ENCODE measurements at regions of chr19 and their contacts with region 1.

Region 1: GRCh38 chr19:35090506-35091237 is 25.0 kb upstream of the FXYD3 start:
- H3K4me3 Mint-ChIP-seq: no peak overlapping the region
- H3K27ac Mint-ChIP-seq: no peak overlapping the region
- H3K4me1 Mint-ChIP-seq: no peaks in the 10 kb centered on the region
- H3K27me3 Mint-ChIP-seq: peaks cover 26% of the 10 kb centered on the region

Region 2: GRCh38 chr19:35044317-35045117 is 46.2 kb before region 1 on chr19:
- intact Hi-C with region 1: loop called (anchors 10 kb)
- H3K4me3 Mint-ChIP-seq: no peak overlapping the region
- H3K27ac Mint-ChIP-seq: no peak overlapping the region
- H3K4me1 Mint-ChIP-seq: peaks cover 25% of the 10 kb centered on the region
- H3K27me3 Mint-ChIP-seq: peaks cover 61% of the 10 kb centered on the region

Region 3: DNA sequence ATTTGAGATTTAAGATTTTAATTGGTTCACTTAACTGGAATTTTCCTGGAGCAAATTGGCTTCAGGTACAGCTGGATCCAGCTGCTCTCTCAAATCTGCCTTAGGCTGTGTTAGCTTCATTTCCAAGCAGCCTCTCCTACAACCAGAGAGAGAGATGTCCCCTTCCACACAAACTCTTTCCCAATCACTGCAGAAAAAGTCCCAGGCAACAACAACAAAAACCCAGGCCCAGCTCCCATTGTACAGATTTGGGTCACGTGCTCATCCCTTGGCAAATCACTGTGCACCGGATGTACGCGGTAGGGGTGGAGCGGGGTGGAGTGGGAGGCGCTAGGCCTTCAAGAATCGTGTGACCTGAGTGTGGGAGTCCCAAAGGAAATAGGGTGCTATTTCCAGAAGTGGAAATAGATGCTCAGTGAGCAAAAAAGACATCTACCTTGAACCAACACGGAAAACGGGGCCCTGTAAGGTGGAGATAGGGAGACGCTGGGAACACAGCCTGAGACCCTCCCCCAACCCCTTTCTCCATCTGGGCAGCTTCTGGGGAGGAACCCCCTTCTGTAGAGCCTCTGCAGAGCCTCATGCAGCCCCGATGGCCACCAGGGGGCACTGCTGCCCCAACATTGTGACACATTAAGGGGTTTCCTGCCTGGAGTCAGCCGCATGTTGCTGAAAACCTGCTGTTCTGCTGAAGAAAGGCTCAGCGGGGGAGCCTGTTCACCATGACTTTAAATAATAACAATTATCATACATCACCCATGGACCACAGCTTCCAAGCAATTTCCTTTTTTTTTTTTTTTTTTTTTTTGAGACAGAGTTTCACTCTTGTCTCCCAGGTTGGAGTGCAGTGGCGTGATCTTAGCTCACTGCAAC is 23.7 kb before region 1 on chr19:
- intact Hi-C with region 1: loop called (anchors 2 kb)
- H3K4me3 Mint-ChIP-seq: peak overlapping the region; percentile 30
- H3K27ac Mint-ChIP-seq: no peak overlapping the region
- H3K4me1 Mint-ChIP-seq: peaks cover 6% of the 10 kb centered on the region
- H3K27me3 Mint-ChIP-seq: peaks cover 13% of the 10 kb centered on the region

Region 4: DNA sequence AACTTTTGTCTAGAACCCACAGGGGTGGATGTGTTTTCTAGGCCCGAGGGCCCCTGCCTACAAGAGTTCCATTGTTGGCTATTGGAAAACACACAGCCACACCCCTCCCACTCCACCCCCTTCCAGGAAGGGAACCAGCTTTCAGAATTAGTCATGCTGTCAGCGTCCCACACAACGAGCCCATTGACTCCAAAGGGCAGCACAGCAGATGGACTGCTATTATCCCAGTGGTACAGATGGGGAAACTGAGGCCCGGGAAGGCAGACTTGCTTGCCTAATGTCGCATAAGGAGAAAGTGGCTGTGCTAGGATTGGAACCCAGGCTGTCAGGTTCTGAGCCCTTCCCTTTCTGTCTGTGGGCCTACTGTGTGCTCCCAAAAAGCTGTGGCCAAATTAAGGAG is 16.9 kb after region 1 on chr19:
- intact Hi-C with region 1: no loop called
- H3K4me3 Mint-ChIP-seq: no peak overlapping the region
- H3K27ac Mint-ChIP-seq: peak overlapping the region; percentile 76
- H3K4me1 Mint-ChIP-seq: peaks cover 34% of the 10 kb centered on the region
- H3K27me3 Mint-ChIP-seq: peaks cover 20% of the 10 kb centered on the region